Caco-2 (cell line): ENCODE measurements at regions of chr19 and their contacts with region 1.

Region 1: DNA sequence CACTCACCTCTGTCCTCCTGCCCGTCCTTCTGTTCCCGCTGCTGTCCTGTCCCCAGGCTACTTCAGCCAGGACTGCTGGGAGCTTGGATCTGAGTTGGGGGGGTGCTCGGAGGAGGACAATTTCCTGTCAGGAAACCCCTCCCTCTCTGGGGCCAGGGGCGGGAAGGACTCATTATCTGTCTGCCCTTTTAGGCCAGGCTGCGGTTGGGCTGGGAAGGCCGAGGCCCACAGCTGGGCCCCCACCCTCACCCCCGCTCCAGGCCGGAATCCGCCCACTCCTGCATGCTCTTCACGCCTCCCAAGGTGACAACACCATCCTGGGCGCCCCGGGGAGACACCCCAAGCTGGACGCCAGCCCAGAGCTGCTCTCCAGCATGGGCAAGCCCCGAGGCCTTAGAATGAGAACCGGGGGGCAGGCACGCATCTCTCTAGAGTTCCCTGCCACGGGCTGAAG is at the start of gene EXOC3L2:
- DNase-seq: no peak
- H3K4me3 ChIP-seq: no peak within 1 kb of the TSS
- H3K4me3 Mint-ChIP-seq: no peak within 1 kb of the TSS
- H3K27ac Mint-ChIP-seq: peak within 1 kb of the TSS; percentile 23
- H3K4me1 ChIP-seq: 0 out of 2 replicates have a peak, but pooled peaks cover 3% of the 10 kb centered on the region
- H3K4me1 Mint-ChIP-seq: no peaks in the 10 kb centered on the region
- H3K27me3 ChIP-seq: no peaks in the 10 kb centered on the region
- H3K27me3 Mint-ChIP-seq: peaks cover 2% of the 10 kb centered on the region
- CTCF ChIP-seq: no peak
- total RNA-seq, gene EXOC3L2: not detected in 2 replicates

Region 2: GRCh38 chr19:45164577-45165335 is 80.6 kb before region 1 on chr19:
- CTCF ChIA-PET with region 1: interaction called, 5 read pairs
- POLR2A ChIA-PET with region 1: no interaction called
- intact Hi-C with region 1: loop called (anchors 5 kb)
- DNase-seq: peak in 1 of 2 experiments; percentile 41
- H3K4me3 ChIP-seq: no peak overlapping the region
- H3K4me3 Mint-ChIP-seq: no peak overlapping the region
- H3K27ac Mint-ChIP-seq: no peak overlapping the region
- H3K4me1 ChIP-seq: peaks cover 19% of the 10 kb centered on the region
- H3K4me1 Mint-ChIP-seq: peaks cover 23% of the 10 kb centered on the region
- H3K27me3 ChIP-seq: no peaks in the 10 kb centered on the region
- H3K27me3 Mint-ChIP-seq: no peaks in the 10 kb centered on the region
- CTCF ChIP-seq: no peak